ENCODE measurements at regions of chr7 and their contacts with region 1.

Region 1: DNA sequence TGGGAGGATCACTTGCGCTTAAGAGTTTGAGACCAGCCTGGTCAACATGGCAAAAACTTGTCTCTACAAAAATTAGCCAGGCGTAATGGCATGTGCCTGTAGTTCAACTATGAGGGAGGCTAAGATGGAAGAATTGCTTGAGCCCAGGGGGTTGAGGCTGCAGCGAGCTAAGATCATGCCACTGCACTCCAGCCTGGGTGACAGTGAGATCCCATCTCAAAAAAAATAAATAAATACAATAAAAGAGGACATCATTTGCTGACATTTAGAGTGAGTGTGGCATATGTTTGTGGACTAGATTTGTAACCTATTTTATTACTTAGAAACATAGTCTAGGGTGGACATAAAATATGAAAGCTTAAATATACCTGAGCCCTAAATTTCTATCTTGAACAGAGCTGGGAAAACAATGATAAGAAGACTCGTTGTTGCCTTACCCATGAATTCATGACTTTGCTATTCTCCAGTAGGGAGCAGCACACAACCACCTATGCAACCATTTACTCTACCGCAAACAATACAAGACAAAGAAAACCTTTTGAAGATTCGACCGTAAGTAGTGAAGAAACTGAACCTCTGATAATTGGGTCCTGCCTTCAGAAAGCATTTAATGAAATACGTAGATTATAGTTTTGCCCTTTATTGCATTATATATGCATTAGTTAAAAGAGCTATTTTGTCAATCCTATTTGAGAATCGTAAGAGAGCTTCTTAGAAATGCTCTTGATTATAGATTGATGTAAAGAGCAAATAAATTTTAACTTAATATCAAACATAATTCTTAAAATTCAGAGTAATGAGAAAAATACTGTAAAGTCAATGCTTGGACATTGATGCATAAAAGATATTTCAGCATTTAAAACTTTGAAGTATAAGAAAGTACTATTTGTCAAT is 83.5 kb downstream of the GNAT3 start:
- DNase-seq: peak; percentile 29
- CTCF ChIP-seq: peak; percentile 66

Region 2: DNA sequence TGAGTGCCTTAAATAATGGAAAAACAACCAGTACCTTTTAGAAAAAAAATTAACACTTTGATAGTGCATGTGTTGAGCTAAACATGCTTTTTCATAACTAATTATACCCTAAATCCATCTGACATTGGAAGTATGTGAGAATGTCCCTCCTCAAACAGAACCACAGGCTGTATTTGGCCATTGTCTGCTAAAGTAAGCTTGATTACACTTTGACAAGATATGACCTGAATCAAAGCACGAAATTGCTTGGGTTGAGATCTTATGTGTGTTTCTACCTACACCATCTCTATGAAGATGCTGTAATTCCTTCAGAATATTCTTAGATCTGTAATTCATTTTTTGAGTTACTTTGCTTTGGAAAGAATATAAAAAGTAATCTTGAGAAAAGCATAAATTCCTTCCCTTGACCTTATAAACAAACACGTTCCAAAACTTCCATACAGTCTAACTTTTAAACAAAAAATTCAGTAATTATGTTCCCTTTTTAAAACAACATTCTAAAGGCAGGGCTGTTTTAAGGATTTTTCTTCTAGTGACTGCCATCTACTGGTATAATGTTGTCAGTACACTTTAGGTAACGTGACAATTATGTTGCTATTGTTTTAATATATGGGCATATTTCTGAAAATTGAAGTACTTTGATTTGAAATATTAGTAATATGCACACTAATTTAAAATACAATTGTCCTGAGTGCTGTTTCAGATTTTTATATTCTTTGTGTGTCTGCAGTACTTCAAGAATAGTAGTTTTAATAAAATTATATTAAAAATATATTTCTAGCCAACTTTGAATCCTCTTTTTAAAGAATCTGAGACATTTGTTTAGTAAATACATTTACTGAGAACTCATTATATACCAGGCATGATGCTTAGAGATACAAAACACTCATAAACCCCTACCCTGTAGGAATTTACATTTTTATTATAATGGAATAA is 231.0 kb after region 1 on chr7:
- in situ Hi-C with region 1: loop called (anchors 25 kb)
- DNase-seq: peak; percentile 17
- CTCF ChIP-seq: peak; percentile 58